A549 (cell line): ENCODE measurements at regions of chr9 and their contacts with region 1.

Region 1: GRCh38 chr9:36450110-36450732 is 50.2 kb upstream of the RNF38 start:
- DNase-seq: peak; percentile 38 to 60
- ATAC-seq: peak; percentile 59 to 66; a peak in 3 of 6 replicates
- H3K4me3 ChIP-seq: no peak overlapping the region
- H3K27ac ChIP-seq: no peak overlapping the region
- H3K4me1 ChIP-seq: peaks cover 4% of the 10 kb centered on the region; the same call in 1 of the 3 replicates
- CTCF ChIP-seq: peak; percentile 96
- EP300 ChIP-seq: no peak
- POLR2A ChIP-seq: no peak
- RAD21 ChIP-seq: peak; percentile 82 to 91

Region 2: DNA sequence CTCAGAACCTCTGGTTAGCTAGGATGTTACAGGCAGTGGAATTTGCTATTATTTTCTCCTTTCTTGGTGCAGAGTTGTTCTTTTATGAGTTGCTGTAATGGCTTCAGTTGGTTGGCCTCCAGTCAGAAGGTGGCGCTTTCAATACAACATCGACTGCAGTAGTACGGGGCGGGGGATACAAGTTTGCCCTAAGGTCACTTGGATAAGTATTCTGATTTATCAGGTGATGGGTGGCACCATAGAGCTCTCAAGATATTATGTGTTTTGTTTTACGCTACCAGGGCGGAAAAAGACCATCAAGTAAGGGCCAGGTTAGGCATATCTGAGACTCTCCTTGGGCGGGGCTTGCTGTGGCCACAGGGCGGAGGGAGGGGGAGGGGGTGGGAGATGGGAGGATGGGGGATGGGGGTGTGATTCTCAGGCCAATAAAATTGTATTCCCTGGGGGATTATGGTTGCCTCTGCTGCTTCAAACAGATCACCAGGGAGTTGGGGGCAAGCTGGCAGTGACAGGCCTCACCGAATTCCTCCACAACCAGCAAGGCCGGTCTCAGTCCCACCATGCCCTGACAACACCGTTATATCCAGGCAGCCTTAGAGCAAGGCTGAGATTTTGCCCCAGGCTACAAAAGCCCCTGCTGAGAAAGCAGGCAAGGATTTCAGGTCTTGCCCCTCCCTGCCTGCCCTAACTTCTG is 34.3 kb before region 1 on chr9:
- CTCF ChIA-PET with region 1: interaction called, 24 read pairs
- POLR2A ChIA-PET with region 1: no interaction called
- DNase-seq: peak in 1 of 2 experiments; percentile 25
- ATAC-seq: no peak
- H3K4me3 ChIP-seq: no peak overlapping the region
- H3K27ac ChIP-seq: 0 out of 6 replicates have a peak overlapping the region, but pooled peaks of 1 of the 2 experiments have one; percentile 15
- H3K4me1 ChIP-seq: peaks cover 30% of the 10 kb centered on the region
- CTCF ChIP-seq: 0 out of 3 replicates have a peak, but pooled peaks have one; percentile 7
- EP300 ChIP-seq: no peak
- POLR2A ChIP-seq: no peak
- RAD21 ChIP-seq: no peak

Region 3: GRCh38 chr9:36436909-36437308 is 13.3 kb before region 1 on chr9:
- CTCF ChIA-PET with region 1: interaction called, 94 read pairs
- POLR2A ChIA-PET with region 1: no interaction called
- DNase-seq: no peak
- ATAC-seq: no peak
- H3K4me3 ChIP-seq: no peak overlapping the region
- H3K27ac ChIP-seq: no peak overlapping the region
- H3K4me1 ChIP-seq: no peaks in the 10 kb centered on the region
- CTCF ChIP-seq: no peak
- EP300 ChIP-seq: no peak
- POLR2A ChIP-seq: no peak
- RAD21 ChIP-seq: no peak

Region 4: DNA sequence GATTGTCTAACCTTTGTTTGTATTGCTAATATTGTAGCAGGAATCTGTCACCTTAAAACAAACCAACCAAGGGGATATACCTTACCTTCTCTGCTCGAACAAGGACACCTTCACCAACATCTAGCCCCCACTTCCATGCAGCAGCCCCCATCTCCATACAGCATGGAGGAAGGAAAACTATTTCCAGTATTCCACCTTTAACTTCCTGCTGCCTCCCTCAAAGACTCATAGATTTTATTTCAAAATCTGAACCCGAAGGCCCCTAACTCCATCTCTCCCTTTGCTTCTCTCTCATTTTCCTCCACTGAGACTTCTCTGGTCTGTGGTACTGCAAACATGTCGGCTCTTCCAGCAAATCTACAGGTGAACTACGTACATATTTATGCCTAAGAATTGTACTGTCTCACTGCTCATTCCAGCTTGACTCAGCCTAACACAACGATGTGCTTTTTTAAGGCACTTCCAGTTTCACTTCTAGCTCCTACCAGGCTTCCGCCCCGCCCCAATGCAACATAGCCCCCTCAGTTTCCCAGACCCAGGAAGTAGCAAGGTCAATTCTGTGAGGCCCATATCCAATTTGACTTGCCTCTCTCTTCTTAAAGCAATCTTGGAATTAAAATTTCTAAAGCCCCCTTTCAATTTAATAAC is 20.5 kb after region 1 on chr9:
- CTCF ChIA-PET with region 1: interaction called, 19 read pairs
- POLR2A ChIA-PET with region 1: no interaction called
- DNase-seq: no peak
- ATAC-seq: no peak
- H3K4me3 ChIP-seq: no peak overlapping the region
- H3K27ac ChIP-seq: 0 out of 6 replicates have a peak overlapping the region, but pooled peaks of 1 of the 2 experiments have one; percentile 27
- H3K4me1 ChIP-seq: no peaks in the 10 kb centered on the region
- CTCF ChIP-seq: no peak
- EP300 ChIP-seq: no peak
- POLR2A ChIP-seq: no peak
- RAD21 ChIP-seq: no peak

Region 5: GRCh38 chr9:36517131-36517530 is 66.9 kb after region 1 on chr9:
- CTCF ChIA-PET with region 1: no interaction called
- POLR2A ChIA-PET with region 1: no interaction called
- DNase-seq: no peak
- ATAC-seq: no peak
- H3K4me3 ChIP-seq: no peak overlapping the region
- H3K27ac ChIP-seq: no peak overlapping the region
- H3K4me1 ChIP-seq: no peaks in the 10 kb centered on the region
- CTCF ChIP-seq: no peak
- EP300 ChIP-seq: no peak
- POLR2A ChIP-seq: no peak
- RAD21 ChIP-seq: no peak

Region 6: DNA sequence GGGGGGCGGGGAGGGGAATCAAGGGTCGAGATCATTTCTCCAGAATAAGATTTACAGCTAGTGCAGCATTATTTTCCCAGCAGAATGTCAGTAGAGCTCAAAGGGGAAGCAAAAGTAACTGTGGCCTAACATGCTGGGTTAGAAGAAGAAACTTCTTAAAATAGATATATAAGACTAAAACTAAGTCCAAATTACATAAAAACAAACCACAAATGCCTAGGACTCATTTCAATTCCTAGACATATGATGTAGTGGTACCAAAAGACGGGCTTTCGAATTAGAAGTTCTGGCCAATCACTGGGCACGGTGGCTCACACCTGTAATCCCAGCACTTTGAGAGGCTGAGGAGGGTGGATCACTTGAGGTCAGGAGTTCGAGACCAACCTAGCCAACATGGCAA is 101.7 kb after region 1 on chr9:
- CTCF ChIA-PET with region 1: interaction called, 19 read pairs
- POLR2A ChIA-PET with region 1: no interaction called
- DNase-seq: no peak
- ATAC-seq: no peak
- H3K4me3 ChIP-seq: no peak overlapping the region
- H3K27ac ChIP-seq: no peak overlapping the region
- H3K4me1 ChIP-seq: peaks cover 9% of the 10 kb centered on the region
- CTCF ChIP-seq: no peak
- EP300 ChIP-seq: no peak
- POLR2A ChIP-seq: no peak
- RAD21 ChIP-seq: no peak